ENCODE measurements at regions of chr3 and their contacts with region 1.

Region 1: DNA sequence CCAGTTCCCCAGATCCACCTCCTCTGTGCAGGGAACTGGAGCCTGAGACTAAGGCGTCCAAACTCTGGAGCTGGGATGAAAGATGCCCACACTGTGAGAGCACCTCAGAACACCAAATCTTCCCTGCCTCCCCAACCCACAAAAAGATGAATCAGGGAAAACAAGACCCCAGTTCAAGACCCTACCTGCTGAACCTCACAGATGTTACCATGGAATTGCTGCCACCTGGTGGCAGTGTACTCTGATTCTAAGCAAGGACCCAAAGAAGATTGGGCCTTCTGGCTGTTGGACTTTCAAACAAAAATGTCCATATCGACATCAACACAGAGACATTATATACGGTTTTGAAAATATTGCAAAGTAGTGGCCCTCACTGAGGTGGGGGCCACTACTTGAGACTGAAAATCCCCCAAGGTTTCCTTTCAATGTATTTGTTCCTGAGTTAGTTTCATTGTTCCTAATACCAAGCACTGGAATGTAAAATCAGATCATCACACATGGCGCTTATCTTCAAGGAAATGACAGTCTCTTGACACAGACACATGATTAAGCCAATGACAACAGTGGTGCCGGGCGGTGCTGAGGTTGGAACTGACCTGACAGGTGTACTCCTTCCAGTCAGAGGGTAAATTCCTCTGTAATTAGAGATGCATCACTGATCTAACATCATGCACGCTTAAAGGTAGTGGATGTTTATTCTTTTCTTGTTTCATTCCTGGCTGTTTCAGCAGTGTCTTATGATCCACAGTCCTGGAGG is 67.6 kb downstream of the SLC6A11 start:
- DNase-seq: no peak
- ATAC-seq: no peak
- H3K4me3 ChIP-seq: no peak overlapping the region
- H3K27ac ChIP-seq: no peak overlapping the region
- H3K4me1 ChIP-seq: no peaks in the 10 kb centered on the region
- H3K27me3 ChIP-seq: peaks cover 0 to 8% (median 2%) of the 10 kb centered on the region in 3 donors
- CTCF ChIP-seq: peak; percentile 18

Region 2: GRCh38 chr3:10764259-10765051 is 119.2 kb before region 1 on chr3:
- intact Hi-C with region 1: loop called in 1 of 2 experiments (anchors 5 kb)
- DNase-seq: no peak
- ATAC-seq: no peak
- H3K4me3 ChIP-seq: no peak overlapping the region
- H3K27ac ChIP-seq: no peak overlapping the region
- H3K4me1 ChIP-seq: no peaks in the 10 kb centered on the region
- H3K27me3 ChIP-seq: peaks cover 0 to 56% (median 9%) of the 10 kb centered on the region in 3 donors
- CTCF ChIP-seq: no peak